ENCODE measurements at regions of chr4 and their contacts with region 1.

Region 1: GRCh38 chr4:56435306-56435926 is at the start of gene PPAT:
- DNase-seq: peak; percentile 79 to 97
- ATAC-seq: peak; percentile 86 to 92
- H3K4me3 ChIP-seq: peak within 1 kb of the TSS; percentile 59
- H3K27ac ChIP-seq: peak within 1 kb of the TSS; percentile 91 to 96
- H3K4me1 ChIP-seq: peaks cover 35% of the 10 kb centered on the region; the same call in 2 of the 3 replicates
- CTCF ChIP-seq: no peak
- EP300 ChIP-seq: no peak
- POLR2A ChIP-seq: peak; percentile 87
- RAD21 ChIP-seq: no peak
- polyA plus RNA-seq, gene PPAT: 25.4 and 26.7 TPM in 2 replicates

Region 2: GRCh38 chr4:56229947-56230346 is 205.5 kb before region 1 on chr4:
- CTCF ChIA-PET with region 1: no interaction called
- POLR2A ChIA-PET with region 1: no interaction called
- DNase-seq: no peak
- ATAC-seq: no peak
- H3K4me3 ChIP-seq: no peak overlapping the region
- H3K27ac ChIP-seq: no peak overlapping the region
- H3K4me1 ChIP-seq: no peaks in the 10 kb centered on the region
- CTCF ChIP-seq: no peak
- EP300 ChIP-seq: no peak
- POLR2A ChIP-seq: no peak
- RAD21 ChIP-seq: no peak

Region 3: GRCh38 chr4:56387023-56388001 is 48.1 kb before region 1 on chr4 and contains the start of gene AASDH:
- CTCF ChIA-PET with region 1: no interaction called
- POLR2A ChIA-PET with region 1: interaction called, 60 read pairs
- DNase-seq: peak; percentile 72 to 94
- ATAC-seq: peak; percentile 95 to 99
- H3K4me3 ChIP-seq: peak within 1 kb of the TSS; percentile 81
- H3K27ac ChIP-seq: peak within 1 kb of the TSS; percentile 92 to 97
- H3K4me1 ChIP-seq: peaks cover 4% of the 10 kb centered on the region; the same call in 1 of the 3 replicates
- CTCF ChIP-seq: no peak
- EP300 ChIP-seq: no peak
- POLR2A ChIP-seq: peak; percentile 71
- RAD21 ChIP-seq: no peak
- polyA plus RNA-seq, gene AASDH: 11.1 and 12.2 TPM in 2 replicates

Region 4: DNA sequence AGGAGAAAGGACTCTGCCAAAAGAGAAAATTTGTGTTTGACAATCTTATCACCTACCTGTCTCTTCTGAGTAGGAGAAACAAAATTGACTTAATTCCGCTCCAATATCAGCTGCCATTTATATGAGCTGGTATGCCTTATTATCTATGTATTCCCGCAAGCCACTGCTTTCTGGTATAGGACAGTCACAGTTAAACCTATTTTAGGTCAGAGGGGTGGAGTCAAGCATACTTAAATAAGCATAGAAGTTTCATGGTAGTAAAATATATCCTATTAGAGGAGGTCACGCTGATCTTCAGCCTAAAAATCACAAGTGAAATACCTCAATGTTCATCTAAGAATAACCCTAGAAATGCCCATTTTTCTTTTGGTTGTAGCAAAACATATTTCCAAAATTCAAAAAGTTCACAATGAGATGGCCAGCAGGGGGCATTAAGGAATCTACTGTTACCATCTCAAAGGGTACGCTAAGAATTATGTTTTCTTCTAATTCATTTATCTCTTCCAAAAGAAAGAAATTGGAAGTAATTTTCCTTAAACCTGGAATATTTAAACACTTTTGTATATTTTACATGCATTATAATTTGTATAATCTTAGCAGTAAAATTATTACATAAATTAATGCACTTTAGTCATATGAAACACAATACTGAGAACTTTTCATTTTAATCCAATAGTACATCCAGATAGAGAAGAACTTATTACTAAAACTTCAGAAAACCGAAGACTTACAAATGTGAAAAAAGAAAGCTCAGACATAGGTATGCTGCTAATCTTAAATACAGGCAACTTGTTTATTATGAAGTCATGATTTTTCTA is 10.5 kb before region 1 on chr4:
- CTCF ChIA-PET with region 1: interaction called, 25 read pairs
- POLR2A ChIA-PET with region 1: interaction called, 12 read pairs
- DNase-seq: peak; percentile 7 to 16
- ATAC-seq: peak in 1 of 2 experiments; percentile 57; a peak in 1 of 6 replicates
- H3K4me3 ChIP-seq: no peak overlapping the region
- H3K27ac ChIP-seq: no peak overlapping the region
- H3K4me1 ChIP-seq: no peaks in the 10 kb centered on the region; the same call in 2 of the 3 replicates
- CTCF ChIP-seq: peak; percentile 58
- EP300 ChIP-seq: no peak
- POLR2A ChIP-seq: no peak
- RAD21 ChIP-seq: peak; percentile 7 to 30; a peak in 3 of 5 replicates

Region 5: GRCh38 chr4:56460085-56460484 is 24.7 kb after region 1 on chr4:
- CTCF ChIA-PET with region 1: interaction called, 5 read pairs
- POLR2A ChIA-PET with region 1: interaction called, 13 read pairs
- DNase-seq: no peak
- ATAC-seq: no peak
- H3K4me3 ChIP-seq: no peak overlapping the region
- H3K27ac ChIP-seq: peak overlapping the region in 1 of 2 experiments; percentile 27; a peak in 1 of 6 replicates
- H3K4me1 ChIP-seq: peaks cover 10% of the 10 kb centered on the region; the same call in 2 of the 3 replicates
- CTCF ChIP-seq: no peak
- EP300 ChIP-seq: no peak
- POLR2A ChIP-seq: no peak
- RAD21 ChIP-seq: no peak

Region 6: DNA sequence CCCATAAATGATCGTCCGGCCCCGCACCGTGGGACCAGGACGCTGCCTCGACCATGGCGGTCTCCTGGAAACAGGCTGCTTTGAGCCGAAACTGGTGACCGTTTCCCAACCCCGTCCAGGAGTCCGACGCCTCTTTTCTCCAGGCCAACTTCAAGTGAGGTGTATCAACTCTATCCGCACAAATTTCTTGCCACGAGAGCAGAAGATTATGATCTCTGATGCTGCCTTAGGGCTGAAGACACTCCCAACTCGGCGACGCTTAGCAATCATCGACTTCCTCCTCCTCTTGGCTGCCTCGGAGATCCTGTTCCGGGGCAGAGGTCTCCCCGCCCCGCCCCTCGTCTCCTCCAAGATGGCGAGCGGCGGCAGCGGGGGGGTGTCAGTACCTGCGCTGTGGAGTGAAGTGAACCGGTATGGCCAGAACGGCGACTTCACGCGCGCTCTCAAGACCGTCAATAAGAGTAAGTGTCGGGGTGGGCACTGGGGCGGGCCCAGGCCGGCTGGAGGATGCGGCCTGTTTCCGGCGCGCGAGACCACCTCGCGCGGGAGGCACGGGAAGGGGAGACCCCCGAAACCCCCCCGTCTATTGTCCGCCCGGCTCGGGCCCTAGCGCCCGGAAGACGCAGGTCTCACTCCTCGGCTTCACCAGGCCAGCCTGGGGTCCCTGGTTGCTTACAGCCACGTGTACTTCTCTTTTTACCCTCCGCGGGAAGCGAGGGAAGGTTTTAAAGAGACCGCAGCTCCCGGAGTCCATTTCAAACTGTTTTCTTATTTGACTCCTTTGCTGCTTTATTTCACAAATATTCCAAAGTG is 32.1 kb after region 1 on chr4 and contains the start of gene SRP72:
- CTCF ChIA-PET with region 1: no interaction called
- POLR2A ChIA-PET with region 1: interaction called, 33 read pairs
- DNase-seq: peak; percentile 68 to 84
- ATAC-seq: peak; percentile 91 to 94
- H3K4me3 ChIP-seq: peak within 1 kb of the TSS; percentile 98
- H3K27ac ChIP-seq: peak within 1 kb of the TSS; percentile 98 to 100
- H3K4me1 ChIP-seq: peaks cover 27% of the 10 kb centered on the region; the same call in 2 of the 3 replicates
- CTCF ChIP-seq: no peak
- EP300 ChIP-seq: no peak
- POLR2A ChIP-seq: peak; percentile 71
- RAD21 ChIP-seq: no peak
- polyA plus RNA-seq, gene SRP72: 114 and 135 TPM in 2 replicates

Measured in A549 (cell line).